Caco-2 (cell line): ENCODE measurements at regions of chr10 and their contacts with region 1.

Region 1: DNA sequence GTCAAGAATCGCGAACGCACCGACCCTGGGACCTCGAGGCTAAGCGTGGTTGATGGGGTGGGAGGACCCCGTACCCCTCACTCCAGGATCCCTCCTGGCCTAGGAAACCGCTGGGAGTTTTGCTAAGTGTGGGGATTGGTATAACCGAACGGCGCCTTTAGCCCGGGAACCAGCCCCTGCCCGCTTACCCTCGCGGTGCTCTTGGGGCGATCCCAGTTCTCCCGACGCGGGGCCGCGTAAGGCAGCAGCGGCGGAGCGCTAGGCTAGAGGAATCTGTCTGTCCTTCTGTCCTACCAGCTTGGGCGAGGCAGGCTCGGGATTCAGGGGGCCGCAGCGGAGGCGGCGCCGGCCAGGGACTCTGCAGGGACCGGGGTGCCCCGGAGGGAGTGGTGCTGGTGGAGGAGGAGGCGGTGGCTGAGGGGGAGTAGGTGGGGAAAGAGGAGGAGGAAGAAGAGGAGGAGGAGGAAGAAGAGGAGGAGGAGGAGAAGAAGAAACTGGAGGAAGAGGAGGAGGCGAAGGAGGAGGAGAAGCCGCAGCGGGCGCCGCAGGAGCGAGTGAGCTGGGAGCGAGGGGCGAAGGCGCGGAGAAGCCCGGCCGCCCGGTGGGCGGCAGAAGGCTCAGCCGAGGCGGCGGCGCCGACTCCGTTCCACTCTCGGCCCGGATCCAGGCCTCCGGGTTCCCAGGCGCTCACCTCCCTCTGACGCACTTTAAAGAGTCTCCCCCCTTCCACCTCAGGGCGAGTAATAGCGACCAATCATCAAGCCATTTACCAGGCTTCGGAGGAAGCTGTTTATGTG is 439 bp upstream of the EMX2 start:
- DNase-seq: peak; percentile 88 to 90
- H3K4me3 ChIP-seq: peak overlapping the region; percentile 90
- H3K4me3 Mint-ChIP-seq: peak overlapping the region; percentile 93
- H3K27ac Mint-ChIP-seq: peak overlapping the region; percentile 65
- H3K4me1 ChIP-seq: peaks cover 9% of the 10 kb centered on the region
- H3K4me1 Mint-ChIP-seq: peaks cover 14% of the 10 kb centered on the region
- H3K27me3 ChIP-seq: no peaks in the 10 kb centered on the region
- H3K27me3 Mint-ChIP-seq: no peaks in the 10 kb centered on the region
- CTCF ChIP-seq: no peak

Region 2: GRCh38 chr10:116721547-116722392 is 820.3 kb before region 1 on chr10:
- CTCF ChIA-PET with region 1: no interaction called
- POLR2A ChIA-PET with region 1: no interaction called
- intact Hi-C with region 1: no loop called
- DNase-seq: peak in 1 of 2 experiments; percentile 39
- H3K4me3 ChIP-seq: no peak overlapping the region
- H3K4me3 Mint-ChIP-seq: peak overlapping the region; percentile 49
- H3K27ac Mint-ChIP-seq: peak overlapping the region; percentile 64
- H3K4me1 ChIP-seq: peaks cover 47% of the 10 kb centered on the region
- H3K4me1 Mint-ChIP-seq: peaks cover 24% of the 10 kb centered on the region
- H3K27me3 ChIP-seq: no peaks in the 10 kb centered on the region
- H3K27me3 Mint-ChIP-seq: no peaks in the 10 kb centered on the region
- CTCF ChIP-seq: no peak

Region 3: DNA sequence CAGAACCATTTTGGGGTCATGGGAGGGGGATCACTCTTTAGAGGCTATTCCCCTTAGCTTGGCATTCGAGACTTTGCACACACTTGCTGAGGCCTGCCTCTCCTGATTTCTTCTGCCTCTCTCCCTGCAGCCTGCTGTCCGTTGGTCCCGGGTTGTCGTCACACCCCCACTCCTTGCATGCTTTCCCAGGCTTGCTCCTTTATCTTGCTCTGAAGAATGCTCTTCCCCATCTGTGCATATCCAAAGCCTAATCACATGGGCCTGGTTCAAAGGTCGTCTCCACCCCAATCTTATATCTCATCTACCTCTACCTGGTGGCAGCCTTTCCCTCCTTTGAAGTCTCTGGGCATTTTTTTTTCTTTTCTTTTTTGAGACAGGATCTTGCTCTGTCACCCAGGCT is 23.9 kb before region 1 on chr10:
- CTCF ChIA-PET with region 1: no interaction called
- POLR2A ChIA-PET with region 1: interaction called, 4 read pairs
- intact Hi-C with region 1: loop called (anchors 1 kb)
- DNase-seq: peak; percentile 88 to 93
- H3K4me3 ChIP-seq: no peak overlapping the region
- H3K4me3 Mint-ChIP-seq: peak overlapping the region; percentile 49
- H3K27ac Mint-ChIP-seq: peak overlapping the region; percentile 85
- H3K4me1 ChIP-seq: peaks cover 54% of the 10 kb centered on the region
- H3K4me1 Mint-ChIP-seq: peaks cover 31% of the 10 kb centered on the region
- H3K27me3 ChIP-seq: no peaks in the 10 kb centered on the region
- H3K27me3 Mint-ChIP-seq: no peaks in the 10 kb centered on the region
- CTCF ChIP-seq: no peak

Region 4: DNA sequence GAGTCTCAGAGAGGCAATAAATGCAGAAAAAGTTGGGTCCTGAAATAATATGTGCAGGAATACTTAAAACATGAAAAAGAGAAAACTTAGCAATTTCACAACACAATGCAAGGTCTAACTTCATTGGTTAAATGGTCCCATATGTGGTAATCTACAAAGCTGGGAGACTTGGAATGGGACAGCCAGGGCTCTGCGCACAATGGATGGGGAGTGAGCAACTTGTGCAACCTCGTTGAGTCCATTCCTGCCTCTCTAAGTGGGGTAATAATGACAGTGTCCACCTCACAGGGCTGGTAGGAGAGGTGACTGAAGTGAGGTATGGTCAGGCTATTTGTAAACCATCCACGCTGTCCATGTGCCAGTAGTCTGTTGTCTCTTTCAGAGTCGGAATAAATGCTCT is 11.3 kb before region 1 on chr10:
- CTCF ChIA-PET with region 1: no interaction called
- POLR2A ChIA-PET with region 1: no interaction called
- intact Hi-C with region 1: no loop called
- DNase-seq: no peak
- H3K4me3 ChIP-seq: no peak overlapping the region
- H3K4me3 Mint-ChIP-seq: no peak overlapping the region
- H3K27ac Mint-ChIP-seq: no peak overlapping the region
- H3K4me1 ChIP-seq: peaks cover 13% of the 10 kb centered on the region; the same call in 1 of the 2 replicates
- H3K4me1 Mint-ChIP-seq: peaks cover 7% of the 10 kb centered on the region
- H3K27me3 ChIP-seq: no peaks in the 10 kb centered on the region
- H3K27me3 Mint-ChIP-seq: no peaks in the 10 kb centered on the region
- CTCF ChIP-seq: no peak

Region 5: GRCh38 chr10:117597216-117597615 is 55.1 kb after region 1 on chr10:
- CTCF ChIA-PET with region 1: no interaction called
- POLR2A ChIA-PET with region 1: no interaction called
- intact Hi-C with region 1: no loop called
- DNase-seq: no peak
- H3K4me3 ChIP-seq: no peak overlapping the region
- H3K4me3 Mint-ChIP-seq: no peak overlapping the region
- H3K27ac Mint-ChIP-seq: peak overlapping the region; percentile 61
- H3K4me1 ChIP-seq: peaks cover 31% of the 10 kb centered on the region
- H3K4me1 Mint-ChIP-seq: peaks cover 7% of the 10 kb centered on the region
- H3K27me3 ChIP-seq: no peaks in the 10 kb centered on the region
- H3K27me3 Mint-ChIP-seq: no peaks in the 10 kb centered on the region
- CTCF ChIP-seq: no peak

Region 6: DNA sequence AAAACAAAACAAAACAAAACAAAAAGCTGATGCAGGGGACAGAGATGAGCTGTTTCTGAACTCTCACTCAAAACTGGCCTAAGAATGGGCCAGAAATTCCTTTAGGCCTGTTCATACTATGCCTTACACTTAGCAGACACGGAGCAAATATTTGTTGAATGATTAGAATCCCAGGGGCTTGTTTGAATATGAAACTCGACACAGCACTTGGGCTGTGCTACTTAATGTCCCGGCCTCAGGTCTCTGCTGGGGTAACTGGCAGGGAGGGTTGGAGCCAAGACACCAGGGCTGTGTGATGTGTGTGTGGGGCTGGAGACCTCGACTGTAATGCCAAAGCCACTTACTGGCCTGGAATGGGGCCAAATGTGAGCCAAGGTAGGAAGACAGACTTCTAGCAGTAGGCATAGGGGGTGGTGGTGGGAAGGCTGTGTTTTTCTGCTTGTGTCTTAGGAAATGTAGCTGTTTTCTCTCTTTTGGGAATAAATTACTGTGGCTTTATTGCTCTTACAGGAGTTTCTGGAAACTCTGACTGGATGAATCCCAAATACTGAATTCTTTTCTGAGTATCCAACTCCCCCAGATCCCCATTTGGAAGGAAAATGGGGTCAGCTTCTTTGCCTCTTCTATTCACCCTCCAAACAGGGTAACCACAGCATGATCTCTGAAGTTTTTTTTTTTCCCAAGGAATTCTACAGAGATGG is 67.1 kb after region 1 on chr10:
- CTCF ChIA-PET with region 1: interaction called, 3 read pairs
- POLR2A ChIA-PET with region 1: no interaction called
- intact Hi-C with region 1: loop called (anchors 2 kb)
- DNase-seq: peak; percentile 71 to 75
- H3K4me3 ChIP-seq: no peak overlapping the region
- H3K4me3 Mint-ChIP-seq: peak overlapping the region; percentile 45
- H3K27ac Mint-ChIP-seq: peak overlapping the region; percentile 84
- H3K4me1 ChIP-seq: peaks cover 30% of the 10 kb centered on the region
- H3K4me1 Mint-ChIP-seq: peaks cover 36% of the 10 kb centered on the region
- H3K27me3 ChIP-seq: no peaks in the 10 kb centered on the region
- H3K27me3 Mint-ChIP-seq: no peaks in the 10 kb centered on the region
- CTCF ChIP-seq: no peak

Region 7: DNA sequence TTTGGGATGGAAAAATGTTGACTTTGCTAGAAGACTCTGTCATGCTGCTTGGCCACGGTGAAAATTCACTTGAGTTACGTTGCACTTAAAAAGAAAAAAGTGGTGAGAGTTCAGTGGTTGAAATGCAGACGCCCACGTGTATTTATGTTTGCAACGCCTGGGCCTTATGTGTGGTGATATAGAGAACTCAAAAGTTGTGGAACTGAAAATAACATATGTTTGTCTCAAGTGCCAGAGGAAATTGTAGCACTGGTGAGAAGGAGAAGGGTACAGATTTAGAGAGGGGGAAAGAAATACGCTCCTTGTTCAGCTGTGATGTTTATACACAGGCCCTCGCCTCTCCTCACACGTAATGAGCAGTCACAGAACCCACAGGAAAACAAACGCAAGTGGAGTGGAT is 74.1 kb after region 1 on chr10:
- CTCF ChIA-PET with region 1: no interaction called
- POLR2A ChIA-PET with region 1: no interaction called
- intact Hi-C with region 1: loop called (anchors 2 kb)
- DNase-seq: no peak
- H3K4me3 ChIP-seq: no peak overlapping the region
- H3K4me3 Mint-ChIP-seq: peak overlapping the region; percentile 29
- H3K27ac Mint-ChIP-seq: peak overlapping the region; percentile 68
- H3K4me1 ChIP-seq: peaks cover 25% of the 10 kb centered on the region
- H3K4me1 Mint-ChIP-seq: peaks cover 35% of the 10 kb centered on the region
- H3K27me3 ChIP-seq: no peaks in the 10 kb centered on the region
- H3K27me3 Mint-ChIP-seq: no peaks in the 10 kb centered on the region
- CTCF ChIP-seq: no peak

Region 8: DNA sequence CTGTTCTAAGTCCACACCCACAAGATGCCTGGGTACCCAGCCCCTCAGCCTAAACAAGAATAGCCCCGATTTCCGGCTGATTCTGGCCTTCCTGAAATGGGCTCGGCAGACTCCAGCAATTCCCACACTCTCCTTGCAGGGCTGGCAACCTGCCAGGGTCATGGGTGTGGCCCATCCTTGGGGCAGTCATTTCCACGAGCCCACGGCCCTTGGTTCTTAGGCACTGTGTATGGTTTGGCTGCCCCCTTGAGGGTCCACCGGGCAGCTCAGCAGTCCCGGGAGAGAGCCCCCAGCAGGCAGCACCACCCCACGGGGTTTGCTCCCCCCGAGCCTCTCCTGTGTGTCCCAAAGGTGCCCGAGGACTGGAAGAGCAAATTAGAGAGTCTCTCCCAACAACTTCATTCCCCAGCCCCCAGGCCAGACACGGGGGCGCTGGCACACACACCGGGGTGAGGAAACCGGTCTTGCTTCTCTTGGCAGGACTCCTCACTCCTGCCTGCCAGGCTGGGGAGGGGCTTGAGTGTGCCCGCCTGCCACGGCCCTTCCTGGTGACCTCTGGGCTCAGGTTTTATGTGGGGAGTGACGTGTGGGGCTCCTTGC is 142.7 kb after region 1 on chr10:
- CTCF ChIA-PET with region 1: no interaction called
- POLR2A ChIA-PET with region 1: no interaction called
- intact Hi-C with region 1: loop called (anchors 5 kb)
- DNase-seq: peak in 1 of 2 experiments; percentile 16
- H3K4me3 ChIP-seq: no peak overlapping the region
- H3K4me3 Mint-ChIP-seq: no peak overlapping the region
- H3K27ac Mint-ChIP-seq: no peak overlapping the region
- H3K4me1 ChIP-seq: no peaks in the 10 kb centered on the region
- H3K4me1 Mint-ChIP-seq: no peaks in the 10 kb centered on the region
- H3K27me3 ChIP-seq: no peaks in the 10 kb centered on the region
- H3K27me3 Mint-ChIP-seq: no peaks in the 10 kb centered on the region
- CTCF ChIP-seq: peak; percentile 20 to 35

Region 9: GRCh38 chr10:117752109-117752508 is 210.0 kb after region 1 on chr10:
- CTCF ChIA-PET with region 1: no interaction called
- POLR2A ChIA-PET with region 1: no interaction called
- intact Hi-C with region 1: loop called (anchors 5 kb)
- DNase-seq: no peak
- H3K4me3 ChIP-seq: no peak overlapping the region
- H3K4me3 Mint-ChIP-seq: no peak overlapping the region
- H3K27ac Mint-ChIP-seq: no peak overlapping the region
- H3K4me1 ChIP-seq: no peaks in the 10 kb centered on the region
- H3K4me1 Mint-ChIP-seq: no peaks in the 10 kb centered on the region
- H3K27me3 ChIP-seq: no peaks in the 10 kb centered on the region
- H3K27me3 Mint-ChIP-seq: peaks cover 4% of the 10 kb centered on the region
- CTCF ChIP-seq: no peak